Ovary (tissue), 10 donors: ENCODE measurements at regions of chr11 and their contacts with region 1.

Region 1: GRCh38 chr11:65117216-65118096 is at the start of gene ZNHIT2:
- DNase-seq: peak; percentile 99 to 100 (median 100)
- H3K4me3 ChIP-seq: peak within 1 kb of the TSS; percentile 70
- H3K27ac ChIP-seq: peak within 1 kb of the TSS; percentile 27 to 70
- H3K4me1 ChIP-seq: peaks cover 9% of the 10 kb centered on the region
- H3K27me3 ChIP-seq: no peaks in the 10 kb centered on the region
- CTCF ChIP-seq: peak; percentile 95 to 99 (median 98)
- EP300 ChIP-seq: peak; percentile 13
- POLR2A ChIP-seq: peak; percentile 64
- total RNA-seq, gene ZNHIT2: 10.0 to 33.7 (median 13.4) TPM

Region 2: GRCh38 chr11:63155794-63156193 is 1961.7 kb before region 1 on chr11:
- intact Hi-C with region 1: no loop called
- DNase-seq: no peak
- H3K4me3 ChIP-seq: no peak overlapping the region
- H3K27ac ChIP-seq: no peak overlapping the region
- H3K4me1 ChIP-seq: no peaks in the 10 kb centered on the region
- H3K27me3 ChIP-seq: no peaks in the 10 kb centered on the region
- CTCF ChIP-seq: no peak
- EP300 ChIP-seq: no peak
- POLR2A ChIP-seq: no peak

Region 3: DNA sequence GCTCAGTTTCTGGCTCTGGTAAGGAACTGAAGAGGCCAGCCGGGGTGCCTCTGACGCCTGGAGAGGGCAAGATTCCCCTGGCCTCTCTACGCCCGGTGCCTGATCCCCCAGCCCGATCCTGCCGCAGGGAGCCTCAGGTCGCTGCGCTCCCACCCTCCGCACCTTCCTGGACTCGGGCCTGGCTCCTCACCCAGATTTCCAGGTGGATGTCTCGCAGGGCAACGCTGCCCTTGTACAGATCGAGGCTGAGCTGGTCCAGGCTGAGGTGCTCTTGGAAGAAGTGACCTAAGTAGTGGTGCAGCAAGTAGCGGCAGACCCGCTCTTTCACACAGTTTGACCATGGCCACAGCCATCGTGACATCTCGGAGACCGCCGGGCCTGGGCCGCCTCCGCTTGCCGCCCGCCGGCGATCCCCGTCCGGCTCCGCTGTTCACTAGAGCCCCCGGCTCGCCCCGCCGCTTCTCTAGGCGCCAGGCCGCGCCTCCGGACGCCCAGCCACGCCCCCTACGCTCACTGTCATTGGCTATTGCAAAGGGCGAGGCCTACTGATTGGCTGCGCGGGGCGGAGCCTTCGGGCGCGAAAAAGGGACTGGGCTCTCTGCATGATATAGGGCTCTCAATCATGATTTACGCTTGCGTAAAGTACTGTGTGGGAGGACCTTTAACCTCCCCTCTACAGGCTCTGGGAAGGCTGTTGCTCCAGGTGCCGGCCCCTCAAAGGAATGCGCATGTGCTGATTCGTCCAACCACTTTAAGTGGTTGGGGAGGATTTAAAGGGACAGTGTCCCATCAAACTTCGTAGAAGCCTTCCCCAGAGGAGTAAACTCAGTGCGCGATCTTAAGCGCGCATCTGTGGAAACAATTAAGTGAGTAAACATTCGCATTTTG is 200.4 kb before region 1 on chr11 and contains the start of gene ATG2A:
- intact Hi-C with region 1: loop called in 1 of 4 experiments (anchors 10 kb)
- DNase-seq: peak; percentile 99
- H3K4me3 ChIP-seq: peak within 1 kb of the TSS; percentile 99
- H3K27ac ChIP-seq: peak within 1 kb of the TSS; percentile 58 to 64
- H3K4me1 ChIP-seq: peaks cover 6% of the 10 kb centered on the region
- H3K27me3 ChIP-seq: no peaks in the 10 kb centered on the region
- CTCF ChIP-seq: no peak
- EP300 ChIP-seq: no peak
- POLR2A ChIP-seq: peak; percentile 80
- total RNA-seq, gene ATG2A: 22.2 to 40.1 (median 30.4) TPM

Region 4: DNA sequence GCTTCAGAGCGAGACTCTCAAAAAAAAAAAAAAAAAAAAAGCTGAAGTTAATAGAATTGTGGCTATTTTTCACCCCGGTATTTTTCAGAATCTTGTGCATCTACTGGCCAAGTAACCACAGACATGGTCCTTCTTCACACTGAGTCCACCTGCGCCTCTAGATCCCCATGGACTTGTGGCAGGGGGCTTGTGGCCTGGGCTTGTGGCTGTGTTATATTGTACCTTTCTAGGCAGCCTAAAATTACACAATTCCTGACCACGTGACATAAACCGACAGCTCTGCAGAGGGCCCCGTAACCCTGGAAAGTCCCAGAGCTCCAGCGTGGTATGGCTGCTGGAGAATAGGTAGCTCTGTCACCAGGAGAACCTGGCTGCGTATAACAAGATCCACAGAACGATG is 48.2 kb before region 1 on chr11:
- intact Hi-C with region 1: no loop called
- DNase-seq: no peak
- H3K4me3 ChIP-seq: no peak overlapping the region
- H3K27ac ChIP-seq: no peak overlapping the region
- H3K4me1 ChIP-seq: no peaks in the 10 kb centered on the region
- H3K27me3 ChIP-seq: no peaks in the 10 kb centered on the region
- CTCF ChIP-seq: no peak
- EP300 ChIP-seq: no peak
- POLR2A ChIP-seq: no peak

Region 5: GRCh38 chr11:65083834-65084597 is 33.4 kb before region 1 on chr11 and contains the starts of genes CDCA5 and ZFPL1:
- intact Hi-C with region 1: loop called in 1 of 4 experiments (anchors 5 kb)
- DNase-seq: peak; percentile 92 to 97 (median 95)
- H3K4me3 ChIP-seq: peak within 1 kb of the TSS; percentile 77
- H3K27ac ChIP-seq: peak within 1 kb of the TSS; percentile 75 to 86
- H3K4me1 ChIP-seq: peaks cover 7% of the 10 kb centered on the region
- H3K27me3 ChIP-seq: no peaks in the 10 kb centered on the region
- CTCF ChIP-seq: no peak
- EP300 ChIP-seq: peak; percentile 18
- POLR2A ChIP-seq: peak; percentile 75
- total RNA-seq, gene CDCA5: 0.38 to 2.8 (median 0.52) TPM in 6 of 7 donors, not detected in the other
- total RNA-seq, gene ZFPL1: 30.5 to 41.6 (median 35.1) TPM

Region 6: DNA sequence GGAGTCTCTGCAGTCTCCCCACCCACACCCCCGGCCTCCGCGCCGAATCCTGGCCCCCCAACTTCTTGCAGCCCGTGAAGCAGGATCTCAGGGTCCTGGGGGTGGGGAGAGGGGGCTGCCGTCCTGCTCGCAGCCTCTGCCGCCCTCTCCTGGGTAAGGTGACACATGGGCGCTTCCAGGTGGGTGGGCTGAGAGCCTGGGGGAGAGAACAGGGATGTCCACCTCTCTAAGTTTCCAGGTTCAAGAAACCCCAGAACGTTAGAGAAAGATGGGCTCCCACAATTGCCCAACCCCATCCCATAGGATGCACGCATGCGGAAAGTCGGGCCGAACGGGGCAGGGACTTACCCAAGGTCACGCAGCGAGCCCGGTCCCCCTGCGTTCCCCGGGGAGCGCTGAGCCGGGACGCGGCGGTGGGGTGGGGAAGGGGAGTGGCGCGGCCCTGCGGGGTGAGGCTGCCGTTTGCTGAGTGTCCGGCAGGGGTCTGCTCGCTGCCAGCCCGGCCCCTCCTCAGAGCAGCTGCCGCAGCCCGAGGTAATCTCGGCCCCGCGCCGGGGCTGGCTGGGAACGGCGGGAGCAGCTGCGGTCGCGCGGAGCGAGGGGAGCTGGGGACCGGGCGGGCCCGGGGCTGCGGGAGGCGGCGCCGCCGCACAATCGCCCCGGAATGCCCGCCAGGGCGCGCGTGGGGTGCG is 63.6 kb after region 1 on chr11:
- intact Hi-C with region 1: loop called in 1 of 4 experiments (anchors 10 kb)
- DNase-seq: peak; percentile 50 to 74 (median 60)
- H3K4me3 ChIP-seq: peak overlapping the region; percentile 56
- H3K27ac ChIP-seq: peak overlapping the region; percentile 77 to 86
- H3K4me1 ChIP-seq: peaks cover 6% of the 10 kb centered on the region
- H3K27me3 ChIP-seq: no peaks in the 10 kb centered on the region
- CTCF ChIP-seq: peak; percentile 17 to 52 (median 47)
- EP300 ChIP-seq: no peak
- POLR2A ChIP-seq: no peak